ENCODE measurements at regions of chr12 and their contacts with region 1.

Region 1: GRCh38 chr12:62603061-62603810 is 136.6 kb downstream of the MON2 start:
- DNase-seq: peak; percentile 87
- H3K4me3 ChIP-seq: peak overlapping the region; percentile 69 to 90 (median 89)
- H3K27ac ChIP-seq: peak overlapping the region; percentile 98
- H3K4me1 ChIP-seq: peaks cover 15% of the 10 kb centered on the region
- H3K27me3 ChIP-seq: no peaks in the 10 kb centered on the region
- CTCF ChIP-seq: peak; percentile 27 to 66

Region 2: DNA sequence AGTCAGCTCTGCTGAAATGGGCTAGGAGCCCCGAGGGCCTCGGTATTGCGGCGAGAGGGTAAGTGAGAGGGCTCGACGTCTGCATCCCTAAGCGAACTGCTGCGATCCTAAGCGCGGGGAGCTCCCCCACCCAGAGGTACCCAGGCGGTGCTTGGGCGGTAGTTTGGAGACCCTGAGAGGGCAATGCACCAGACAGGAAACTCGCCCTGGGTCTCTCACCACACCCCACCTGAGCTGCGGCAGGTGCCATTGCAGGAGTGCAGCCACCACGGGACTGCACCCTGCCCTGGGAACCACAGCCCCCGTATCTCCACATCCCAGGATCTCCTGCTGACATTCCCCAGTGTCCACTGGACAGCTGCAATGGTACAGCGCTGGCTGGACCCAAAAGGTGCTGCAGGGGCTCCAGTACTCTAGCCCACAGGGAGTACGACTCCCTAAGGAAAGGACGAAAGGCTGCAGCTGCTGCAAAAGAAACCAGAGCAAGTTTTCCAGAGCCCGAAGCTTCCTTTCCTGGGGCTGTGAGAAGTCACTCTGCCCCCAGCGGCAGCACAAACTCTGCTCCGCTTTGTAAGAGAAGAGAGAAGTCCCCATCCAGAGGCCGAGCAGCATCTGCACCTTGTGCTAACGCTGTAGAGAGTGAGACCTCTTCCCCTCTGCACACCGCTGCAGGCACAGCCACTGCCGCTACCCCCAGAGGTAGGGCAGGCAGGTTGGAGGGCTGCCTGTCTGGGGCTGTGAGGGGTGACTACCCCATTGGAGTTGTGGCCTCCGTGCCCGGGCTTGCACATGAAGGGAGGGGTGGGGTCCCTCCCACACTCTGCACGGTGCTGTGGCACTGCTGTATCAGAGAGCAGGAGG is 167.7 kb before region 1 on chr12:
- CTCF ChIA-PET with region 1: interaction called, 3 read pairs
- dilution Hi-C with region 1: no loop called
- in situ Hi-C with region 1: no loop called
- intact Hi-C with region 1: loop called (anchors 2 kb)
- DNase-seq: peak; percentile 40
- H3K4me3 ChIP-seq: peak overlapping the region; percentile 46 to 52 (median 46)
- H3K27ac ChIP-seq: no peak overlapping the region
- H3K4me1 ChIP-seq: peaks cover 12% of the 10 kb centered on the region
- H3K27me3 ChIP-seq: no peaks in the 10 kb centered on the region
- CTCF ChIP-seq: peak; percentile 43 to 51

Region 3: DNA sequence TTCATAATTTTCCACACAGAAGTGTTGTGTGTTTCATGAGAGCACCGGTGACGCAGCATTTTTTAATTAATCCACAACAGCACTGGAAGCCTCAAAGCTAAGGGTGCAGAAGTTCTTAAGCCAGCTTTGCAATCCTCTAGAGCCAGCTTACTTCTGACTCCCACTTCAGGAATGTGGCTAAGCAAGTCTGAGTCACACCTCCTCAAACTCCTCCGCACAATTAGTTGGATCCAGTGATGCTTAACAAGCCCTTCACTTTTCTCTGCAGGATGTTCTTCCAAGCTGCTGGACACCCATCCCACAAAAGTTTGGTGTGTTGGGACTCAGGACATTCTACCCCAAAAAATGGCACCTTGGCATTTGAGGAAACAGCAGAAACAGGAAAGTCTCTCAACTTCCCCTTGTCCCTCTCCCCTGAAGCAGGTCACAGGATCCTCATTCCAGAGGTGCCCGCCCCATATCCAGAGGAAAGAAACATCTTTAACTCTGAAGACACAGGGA is 121.8 kb after region 1 on chr12:
- CTCF ChIA-PET with region 1: interaction called, 5 read pairs
- dilution Hi-C with region 1: no loop called
- in situ Hi-C with region 1: loop called in 1 of 2 experiments (anchors 10 kb)
- intact Hi-C with region 1: loop called (anchors 1 kb)
- DNase-seq: peak; percentile 99
- H3K4me3 ChIP-seq: peak overlapping the region in 1 of 3 experiments; percentile 13
- H3K27ac ChIP-seq: peak overlapping the region; percentile 93
- H3K4me1 ChIP-seq: peaks cover 35% of the 10 kb centered on the region
- H3K27me3 ChIP-seq: no peaks in the 10 kb centered on the region
- CTCF ChIP-seq: no peak

Region 4: DNA sequence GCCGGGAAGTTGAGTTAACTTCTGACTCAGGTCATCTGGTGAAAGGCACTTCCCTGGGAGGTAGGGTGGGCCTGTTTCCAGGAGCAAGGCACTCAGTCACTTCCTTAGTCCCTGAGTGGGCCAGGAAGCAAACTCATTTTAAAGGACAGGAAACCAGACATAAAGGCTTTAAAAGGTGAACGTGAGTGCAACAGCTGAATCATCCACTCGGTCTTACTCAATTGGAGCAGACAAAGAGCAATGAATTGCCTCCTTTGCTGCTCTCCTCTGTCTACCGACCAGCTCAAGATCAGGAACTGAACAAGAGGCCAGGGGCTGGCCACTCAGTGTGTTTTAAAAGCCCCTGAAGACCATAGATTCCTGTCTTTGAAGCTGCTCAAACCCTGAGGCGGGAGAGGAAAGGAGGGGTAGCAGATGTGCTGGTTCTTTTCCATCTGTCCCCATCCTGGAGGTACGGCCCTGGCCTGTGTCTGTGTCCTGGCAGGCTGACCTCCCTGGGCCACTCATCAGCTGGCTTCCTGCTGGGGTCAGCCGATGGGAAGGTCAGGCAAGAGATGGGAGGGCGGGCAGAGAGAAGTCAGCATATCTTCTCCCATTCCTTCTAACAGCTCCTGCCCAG is 182.8 kb after region 1 on chr12:
- CTCF ChIA-PET with region 1: interaction called, 4 read pairs
- dilution Hi-C with region 1: loop called (anchors 10 kb)
- in situ Hi-C with region 1: loop called in 1 of 2 experiments (anchors 5 kb)
- intact Hi-C with region 1: no loop called
- DNase-seq: peak; percentile 94
- H3K4me3 ChIP-seq: no peak overlapping the region
- H3K27ac ChIP-seq: peak overlapping the region; percentile 50
- H3K4me1 ChIP-seq: peaks cover 21% of the 10 kb centered on the region
- H3K27me3 ChIP-seq: no peaks in the 10 kb centered on the region
- CTCF ChIP-seq: no peak

Region 5: DNA sequence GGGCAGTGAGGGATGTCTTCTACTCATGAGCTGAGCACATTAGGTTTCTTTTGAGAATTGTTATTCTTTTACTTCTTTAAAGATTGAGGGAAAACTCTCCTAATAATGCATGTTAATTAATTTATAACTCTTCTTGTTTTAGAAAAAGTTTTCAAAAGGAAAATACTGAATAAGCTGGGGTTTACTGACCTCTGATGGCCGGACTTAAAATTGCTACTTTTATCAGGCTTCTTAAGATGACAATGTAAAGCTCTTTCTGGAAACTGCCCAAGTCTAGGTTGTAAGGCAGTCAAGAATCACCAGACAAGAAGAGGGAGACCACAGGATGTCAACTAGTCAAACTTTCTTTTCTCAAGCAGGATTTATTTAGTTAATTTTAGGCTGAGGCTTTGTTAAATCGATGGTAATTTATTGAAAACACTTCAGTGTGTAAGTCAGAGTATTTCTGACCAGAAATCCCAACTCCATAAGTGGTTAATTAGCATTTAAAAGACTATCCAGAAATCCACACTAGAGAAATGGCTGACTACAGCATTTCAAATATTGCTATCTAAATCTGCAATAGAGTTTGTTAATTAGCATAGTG is 465.7 kb after region 1 on chr12:
- CTCF ChIA-PET with region 1: interaction called, 3 read pairs
- dilution Hi-C with region 1: no loop called
- in situ Hi-C with region 1: loop called in 1 of 2 experiments (anchors 25 kb)
- intact Hi-C with region 1: loop called (anchors 5 kb)
- DNase-seq: peak; percentile 37
- H3K4me3 ChIP-seq: no peak overlapping the region
- H3K27ac ChIP-seq: no peak overlapping the region
- H3K4me1 ChIP-seq: no peaks in the 10 kb centered on the region
- H3K27me3 ChIP-seq: no peaks in the 10 kb centered on the region
- CTCF ChIP-seq: peak; percentile 56 to 62